ENCODE measurements at regions of chr4 and their contacts with region 1.

Region 1: GRCh38 chr4:68375667-68376559 is 26.0 kb upstream of the YTHDC1 start:
- DNase-seq: peak; percentile 16
- H3K4me3 ChIP-seq: no peak overlapping the region; the same call in none of the 2 replicates
- CTCF ChIP-seq: peak; percentile 85

Region 2: GRCh38 chr4:68271851-68272756 is 103.8 kb before region 1 on chr4:
- CTCF ChIA-PET with region 1: interaction called, 171 read pairs
- POLR2A ChIA-PET with region 1: no interaction called
- DNase-seq: peak; percentile 45
- H3K4me3 ChIP-seq: peak overlapping the region; percentile 41
- CTCF ChIP-seq: peak; percentile 42

Region 3: GRCh38 chr4:68324519-68325262 is 51.2 kb before region 1 on chr4:
- CTCF ChIA-PET with region 1: interaction called, 19 read pairs
- POLR2A ChIA-PET with region 1: no interaction called
- DNase-seq: no peak
- H3K4me3 ChIP-seq: no peak overlapping the region
- CTCF ChIP-seq: no peak

Region 4: DNA sequence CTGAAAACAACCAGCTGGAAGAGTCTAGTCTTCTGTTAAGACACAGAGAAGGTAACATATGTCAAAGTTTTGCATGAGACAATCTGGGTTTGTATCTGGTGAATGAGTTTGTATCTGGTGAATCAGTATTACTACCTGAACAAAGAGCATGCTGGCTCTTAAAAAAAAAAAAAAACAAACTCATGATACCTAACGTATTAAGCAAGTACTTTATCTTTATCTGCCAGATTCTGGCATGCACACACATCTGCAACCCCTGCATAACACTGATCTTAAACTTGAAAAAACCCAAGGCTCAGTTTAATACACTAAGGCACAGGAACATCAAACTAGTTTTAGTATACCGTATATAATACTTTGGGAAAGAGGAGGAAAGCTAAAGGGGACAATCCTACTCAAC is 31.9 kb before region 1 on chr4:
- CTCF ChIA-PET with region 1: interaction called, 18 read pairs
- POLR2A ChIA-PET with region 1: no interaction called
- DNase-seq: no peak
- H3K4me3 ChIP-seq: no peak overlapping the region
- CTCF ChIP-seq: no peak

Region 5: DNA sequence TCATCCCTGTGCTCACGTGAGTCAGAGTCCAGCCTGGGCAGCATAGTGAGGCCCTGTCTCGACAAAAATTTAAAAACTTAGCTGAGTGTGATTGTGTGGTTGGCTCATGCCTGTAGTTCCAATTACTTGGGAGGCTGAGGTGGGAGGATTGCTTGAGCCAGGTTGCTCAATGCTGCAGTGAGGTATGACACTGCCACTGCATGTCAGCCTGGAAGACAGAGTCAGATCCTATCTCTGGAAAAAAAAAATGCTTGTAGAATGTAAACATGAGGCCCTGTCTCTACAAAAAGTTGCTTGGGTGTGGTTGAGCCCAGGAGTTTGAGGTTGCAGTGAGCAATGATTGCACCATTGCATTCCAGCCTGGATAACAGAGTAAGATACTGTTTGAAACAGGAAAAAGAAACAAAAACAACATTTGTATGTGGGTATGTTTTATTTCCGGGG is 14.7 kb before region 1 on chr4:
- CTCF ChIA-PET with region 1: interaction called, 38 read pairs
- POLR2A ChIA-PET with region 1: no interaction called
- DNase-seq: no peak
- H3K4me3 ChIP-seq: no peak overlapping the region
- CTCF ChIP-seq: no peak